ENCODE measurements at regions of chr9 and their contacts with region 1.

Region 1: DNA sequence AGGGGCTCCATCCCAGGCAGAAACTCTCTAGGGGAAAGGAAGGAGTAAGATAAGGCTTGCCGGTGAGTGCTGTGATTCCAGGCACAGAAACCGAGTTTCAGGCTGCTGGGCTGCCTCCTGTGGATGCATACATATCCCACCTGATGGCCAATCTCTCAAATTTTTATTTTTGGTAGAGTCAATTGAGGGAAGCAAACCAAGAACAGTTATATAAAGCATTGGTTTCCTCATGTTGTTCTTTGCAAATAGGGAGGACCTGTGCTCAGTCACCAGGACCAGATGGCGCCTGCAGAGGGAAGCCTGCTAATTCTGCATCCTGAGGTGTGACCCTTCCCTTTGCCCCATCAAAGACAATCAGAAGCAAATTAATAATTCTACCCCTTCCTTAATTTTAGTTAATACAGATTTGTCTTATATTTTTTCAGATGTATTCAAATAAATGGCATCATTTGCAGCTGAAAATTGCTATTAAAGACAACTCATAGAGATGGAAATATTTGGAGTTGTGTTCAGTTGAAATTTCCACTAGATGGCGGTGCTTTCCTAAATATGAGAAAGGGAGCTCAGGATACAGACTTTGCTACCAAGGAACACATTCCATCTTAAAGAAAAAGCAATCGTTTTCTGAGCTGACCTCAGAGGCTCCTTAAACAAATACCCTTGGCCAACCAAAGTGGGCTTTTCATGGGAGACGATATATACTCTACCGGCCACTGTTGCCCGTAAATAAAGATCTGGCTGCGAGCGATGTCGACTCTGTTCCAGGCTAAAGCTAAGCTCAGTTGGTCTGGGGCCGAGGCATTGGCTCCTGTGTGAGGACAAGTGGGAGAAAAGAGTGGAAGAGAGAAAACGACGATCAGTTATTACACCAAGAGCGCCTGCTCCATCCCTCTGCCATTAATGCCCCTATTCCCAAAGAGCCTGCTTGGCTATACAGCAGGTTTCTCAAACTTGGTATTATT is 225.7 kb upstream of the KLF9 start:
- DNase-seq: peak in 1 of 3 donors; percentile 24
- ATAC-seq: no peak
- H3K4me3 ChIP-seq: no peak overlapping the region
- H3K4me1 ChIP-seq: no peaks in the 10 kb centered on the region
- CTCF ChIP-seq: no peak

Region 2: GRCh38 chr9:70382709-70383605 is 257.2 kb before region 1 on chr9:
- intact Hi-C with region 1: no loop called
- DNase-seq: peak in 1 of 3 donors; percentile 18
- ATAC-seq: peak; percentile 67
- H3K4me3 ChIP-seq: no peak overlapping the region
- H3K4me1 ChIP-seq: no peaks in the 10 kb centered on the region
- CTCF ChIP-seq: no peak

Region 3: DNA sequence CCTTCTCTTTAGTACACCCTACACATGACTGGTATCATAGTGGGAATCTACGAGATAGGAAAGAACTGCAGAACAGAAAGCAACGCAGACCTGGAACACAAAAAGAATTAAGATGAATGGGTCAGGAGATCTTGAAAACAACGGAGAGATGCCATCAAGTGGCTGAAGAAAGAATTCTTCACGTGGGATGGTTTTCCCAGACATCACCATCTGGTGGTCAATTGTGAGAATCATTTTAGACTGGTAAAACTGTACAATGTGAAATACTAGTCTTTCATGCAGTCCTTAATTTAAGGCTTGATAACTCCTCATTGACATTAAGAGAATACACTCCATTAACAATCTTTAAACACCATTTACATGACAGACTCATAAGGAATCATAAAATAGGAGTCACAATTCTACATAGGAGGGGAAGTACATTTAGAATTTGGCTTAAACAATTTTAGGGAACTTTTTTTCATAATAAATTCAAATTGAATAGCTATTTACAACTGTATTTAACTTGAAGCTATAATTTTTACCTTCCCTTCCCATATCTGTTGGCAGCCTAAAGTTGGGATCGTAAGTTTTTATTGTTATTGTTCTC is 609.7 kb after region 1 on chr9:
- intact Hi-C with region 1: loop called in 1 of 2 experiments (anchors 5 kb)
- DNase-seq: peak in 1 of 3 donors; percentile 31
- ATAC-seq: peak; percentile 72
- H3K4me3 ChIP-seq: no peak overlapping the region
- H3K4me1 ChIP-seq: no peaks in the 10 kb centered on the region
- CTCF ChIP-seq: no peak